ENCODE measurements at regions of chr22 and their contacts with region 1.

Region 1: DNA sequence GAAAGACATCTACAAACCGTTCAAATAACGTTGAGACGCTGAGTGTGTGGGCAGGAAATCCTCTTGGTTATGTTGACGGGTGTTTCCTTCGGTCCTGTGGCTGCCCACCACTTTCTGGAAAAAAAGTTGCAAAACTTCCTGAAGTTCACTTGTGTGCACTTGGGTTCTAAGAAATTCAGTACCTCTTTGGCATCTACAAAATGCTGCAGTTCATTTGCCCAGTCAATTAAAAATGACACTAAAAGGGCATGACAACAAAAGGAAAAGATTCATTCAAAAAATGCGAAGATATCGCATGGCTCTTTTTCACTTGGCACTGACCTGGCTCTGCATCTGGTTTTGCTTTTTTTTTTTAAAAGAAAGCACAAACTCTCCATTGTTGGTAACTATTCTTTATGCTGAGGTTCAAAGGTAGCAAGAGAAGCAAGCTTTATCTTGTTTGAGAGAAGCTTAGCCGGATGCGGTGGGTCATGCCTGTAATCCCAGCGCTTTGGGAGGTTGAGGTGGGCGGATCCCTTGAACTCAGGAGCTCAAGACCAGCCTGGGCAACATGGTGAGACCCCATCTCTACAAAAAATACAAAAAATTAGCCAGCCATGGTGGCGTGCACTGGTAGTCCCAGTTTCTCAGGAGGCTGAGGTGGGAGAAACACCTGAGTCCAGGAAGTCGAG is 10.6 kb upstream of the XBP1 start:
- DNase-seq: peak; percentile 60
- H3K4me3 Mint-ChIP-seq: peak overlapping the region; percentile 76
- H3K27ac Mint-ChIP-seq: peak overlapping the region; percentile 89
- H3K4me1 Mint-ChIP-seq: peaks cover 81% of the 10 kb centered on the region
- H3K27me3 Mint-ChIP-seq: no peaks in the 10 kb centered on the region

Region 2: DNA sequence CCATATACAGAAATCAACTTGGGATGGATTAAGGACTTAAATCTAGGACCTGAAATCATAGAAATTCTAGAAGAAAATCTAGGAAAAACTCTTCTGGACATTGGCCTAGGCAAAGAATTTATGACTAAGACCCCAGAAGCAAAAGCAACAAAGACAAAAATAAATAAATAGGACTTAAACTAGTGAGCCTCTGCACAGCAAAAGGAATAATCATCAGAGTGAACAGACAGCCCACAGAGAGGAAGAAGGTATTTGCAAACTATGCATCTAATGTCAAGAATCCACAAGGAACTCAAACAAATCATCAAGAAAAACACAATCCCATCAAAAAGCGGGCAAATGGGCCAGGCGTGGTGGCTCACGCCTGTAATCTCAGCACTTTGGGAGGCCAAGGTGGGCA is 163.7 kb before region 1 on chr22:
- intact Hi-C with region 1: no loop called
- DNase-seq: no peak
- H3K4me3 Mint-ChIP-seq: no peak overlapping the region
- H3K27ac Mint-ChIP-seq: no peak overlapping the region
- H3K4me1 Mint-ChIP-seq: no peaks in the 10 kb centered on the region
- H3K27me3 Mint-ChIP-seq: peaks cover 59% of the 10 kb centered on the region

Region 3: DNA sequence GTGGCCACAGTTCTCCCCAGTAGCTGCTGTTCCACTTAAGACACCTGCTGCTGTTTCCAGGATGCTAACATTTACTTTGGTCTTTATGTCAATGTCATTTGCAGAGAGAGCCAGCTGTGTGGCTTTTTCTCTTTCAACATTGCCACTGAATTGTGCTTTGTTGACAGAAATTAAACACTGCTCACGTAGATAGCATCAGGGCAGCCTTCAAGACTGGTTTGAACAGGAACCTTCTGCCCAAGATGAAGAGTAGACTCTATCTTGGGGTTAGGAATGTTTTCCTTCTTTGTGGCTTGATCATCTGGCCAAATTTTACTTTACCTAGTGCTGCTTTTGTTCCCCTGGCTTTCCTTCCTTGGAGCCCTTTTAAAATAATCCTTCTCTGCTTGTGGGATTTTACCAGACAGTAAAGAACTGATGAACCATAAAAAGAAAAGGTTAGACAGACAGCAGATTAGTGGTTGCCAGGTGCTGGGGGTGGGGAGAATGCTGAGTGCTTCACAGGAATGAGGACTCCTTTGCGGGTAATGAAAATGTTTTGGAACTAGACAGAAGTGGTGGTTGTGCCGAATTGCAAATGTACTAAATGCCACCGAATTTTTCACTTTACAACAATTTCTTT is 12.1 kb after region 1 on chr22:
- intact Hi-C with region 1: loop called (anchors 1 kb)
- DNase-seq: peak; percentile 51
- H3K4me3 Mint-ChIP-seq: peak overlapping the region; percentile 65
- H3K27ac Mint-ChIP-seq: peak overlapping the region; percentile 90
- H3K4me1 Mint-ChIP-seq: peaks cover 60% of the 10 kb centered on the region
- H3K27me3 Mint-ChIP-seq: no peaks in the 10 kb centered on the region

Region 4: GRCh38 chr22:29016067-29016938 is 205.3 kb after region 1 on chr22:
- intact Hi-C with region 1: no loop called
- DNase-seq: no peak
- H3K4me3 Mint-ChIP-seq: no peak overlapping the region
- H3K27ac Mint-ChIP-seq: no peak overlapping the region
- H3K4me1 Mint-ChIP-seq: peaks cover 8% of the 10 kb centered on the region
- H3K27me3 Mint-ChIP-seq: peaks cover 23% of the 10 kb centered on the region